ENCODE measurements at regions of chr1 and their contacts with region 1.

Region 1: DNA sequence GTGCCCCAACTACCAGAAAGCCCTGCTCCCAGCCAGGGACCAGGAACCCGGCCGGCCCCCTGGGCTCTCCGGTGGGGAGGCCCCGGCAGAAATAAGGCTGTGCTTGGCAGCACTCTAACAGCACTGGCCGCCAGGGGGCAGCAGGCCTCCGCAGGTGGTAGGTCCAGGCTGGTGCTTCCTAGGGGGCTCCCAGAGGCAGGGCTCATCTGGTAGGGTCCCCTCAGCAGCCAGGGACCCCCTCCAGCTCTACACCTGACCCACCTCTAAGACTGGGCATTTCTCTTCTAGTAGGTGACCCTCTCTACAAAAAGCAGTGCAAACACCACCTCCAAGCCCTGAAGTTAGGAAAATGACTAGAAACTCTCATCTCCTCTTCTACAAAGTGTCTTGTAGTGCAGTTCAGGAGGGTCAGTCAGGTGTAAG is 85.6 kb downstream of the STUM start:
- DNase-seq: peak; percentile 61 to 64
- ATAC-seq: peak; percentile 77 to 95
- H3K4me3 ChIP-seq: no peak overlapping the region
- H3K27ac ChIP-seq: no peak overlapping the region
- H3K4me1 ChIP-seq: no peaks in the 10 kb centered on the region
- CTCF ChIP-seq: peak; percentile 94
- EP300 ChIP-seq: no peak
- POLR2A ChIP-seq: no peak
- RAD21 ChIP-seq: peak; percentile 94 to 96

Region 2: GRCh38 chr1:226397011-226397926 is 236.9 kb before region 1 on chr1:
- CTCF ChIA-PET with region 1: no interaction called
- POLR2A ChIA-PET with region 1: no interaction called
- DNase-seq: no peak
- ATAC-seq: no peak
- H3K4me3 ChIP-seq: no peak overlapping the region
- H3K27ac ChIP-seq: no peak overlapping the region
- H3K4me1 ChIP-seq: no peaks in the 10 kb centered on the region
- CTCF ChIP-seq: no peak
- EP300 ChIP-seq: no peak
- POLR2A ChIP-seq: no peak
- RAD21 ChIP-seq: no peak

Region 3: GRCh38 chr1:226568077-226568831 is 65.9 kb before region 1 on chr1:
- CTCF ChIA-PET with region 1: no interaction called
- POLR2A ChIA-PET with region 1: no interaction called
- DNase-seq: peak; percentile 19 to 35
- ATAC-seq: peak; percentile 78 to 80
- H3K4me3 ChIP-seq: no peak overlapping the region
- H3K27ac ChIP-seq: no peak overlapping the region
- H3K4me1 ChIP-seq: no peaks in the 10 kb centered on the region
- CTCF ChIP-seq: 0 out of 3 replicates have a peak, but pooled peaks have one; percentile 9
- EP300 ChIP-seq: no peak
- POLR2A ChIP-seq: no peak
- RAD21 ChIP-seq: peak in 1 of 2 experiments; percentile 19; a peak in 2 of 5 replicates

Region 4: DNA sequence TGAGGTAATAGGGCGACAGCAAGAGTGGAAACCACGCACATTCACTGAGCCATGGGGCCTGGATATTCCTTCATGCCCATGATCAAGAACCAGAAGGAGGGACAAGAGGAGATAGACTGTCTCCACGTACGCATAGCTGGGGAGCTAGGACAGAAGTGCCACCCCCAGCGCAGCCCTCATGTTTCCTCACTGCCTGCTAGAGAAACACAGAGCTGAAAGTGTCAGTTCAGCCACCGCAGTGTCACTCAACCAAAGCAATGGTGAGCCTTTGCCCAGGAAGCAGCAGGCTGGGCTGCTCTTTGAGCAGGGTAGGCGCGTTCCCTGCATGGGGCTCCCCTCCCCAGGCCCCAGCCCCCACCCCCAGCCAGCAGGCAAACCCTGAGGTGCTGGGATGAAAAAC is 17.1 kb before region 1 on chr1:
- CTCF ChIA-PET with region 1: interaction called, 10 read pairs
- POLR2A ChIA-PET with region 1: no interaction called
- DNase-seq: no peak
- ATAC-seq: 0 out of 6 replicates have a peak, but pooled peaks of 1 of the 2 experiments have one; percentile 8
- H3K4me3 ChIP-seq: no peak overlapping the region
- H3K27ac ChIP-seq: no peak overlapping the region
- H3K4me1 ChIP-seq: no peaks in the 10 kb centered on the region
- CTCF ChIP-seq: no peak
- EP300 ChIP-seq: no peak
- POLR2A ChIP-seq: no peak
- RAD21 ChIP-seq: no peak

Region 5: GRCh38 chr1:226656601-226657277 is 22.6 kb after region 1 on chr1:
- CTCF ChIA-PET with region 1: interaction called, 17 read pairs
- POLR2A ChIA-PET with region 1: no interaction called
- DNase-seq: no peak
- ATAC-seq: no peak
- H3K4me3 ChIP-seq: no peak overlapping the region
- H3K27ac ChIP-seq: no peak overlapping the region
- H3K4me1 ChIP-seq: 0 out of 3 replicates have a peak, but pooled peaks cover 3% of the 10 kb centered on the region
- CTCF ChIP-seq: no peak
- EP300 ChIP-seq: no peak
- POLR2A ChIP-seq: no peak
- RAD21 ChIP-seq: no peak

Region 6: DNA sequence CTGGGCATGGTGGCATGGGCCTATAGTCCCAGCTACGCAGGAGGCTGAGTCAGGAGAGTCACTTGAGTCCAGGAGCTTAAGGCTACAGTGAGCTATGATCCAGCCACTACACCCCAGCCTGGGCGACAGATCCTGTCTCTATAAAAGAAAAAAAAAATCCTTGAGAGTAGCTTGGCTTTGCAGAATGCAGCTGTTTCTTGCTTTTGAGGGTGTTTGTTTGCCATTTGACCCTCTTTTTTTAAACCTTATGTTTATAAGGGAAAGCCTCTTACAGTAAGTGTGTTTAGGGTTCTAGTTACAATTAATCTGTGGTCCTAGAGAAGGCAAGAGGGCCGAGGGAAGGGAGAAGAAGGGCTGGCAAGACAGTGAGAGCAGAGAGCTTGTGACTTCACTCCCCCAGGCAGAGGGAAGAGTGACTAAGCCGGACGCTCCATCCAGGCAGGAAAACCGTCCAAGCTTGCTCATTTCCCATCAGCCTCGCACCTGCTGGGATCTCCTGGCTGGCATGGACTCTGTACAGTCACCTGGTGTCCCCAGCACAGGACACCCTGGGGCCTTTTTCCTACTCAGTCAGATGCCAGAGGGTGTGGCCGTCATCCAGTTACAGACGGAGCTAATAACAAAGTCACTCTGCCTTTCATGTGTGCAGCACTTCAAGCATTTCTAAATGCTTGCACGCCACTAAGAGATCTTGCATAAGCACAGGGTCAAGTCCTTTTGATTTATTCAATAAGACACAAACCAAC is 180.7 kb after region 1 on chr1:
- CTCF ChIA-PET with region 1: interaction called, 127 read pairs
- POLR2A ChIA-PET with region 1: no interaction called
- DNase-seq: peak; percentile 56 to 57
- ATAC-seq: peak; percentile 85 to 93
- H3K4me3 ChIP-seq: no peak overlapping the region
- H3K27ac ChIP-seq: peak overlapping the region; percentile 49 to 68
- H3K4me1 ChIP-seq: peaks cover 27% of the 10 kb centered on the region; the same call in 2 of the 3 replicates
- CTCF ChIP-seq: no peak
- EP300 ChIP-seq: peak in 1 of 2 experiments; percentile 52; a peak in 1 of 5 replicates
- POLR2A ChIP-seq: no peak
- RAD21 ChIP-seq: no peak